AG04450 (cell line): ENCODE measurements at regions of chr1 and their contacts with region 1.

Region 1: DNA sequence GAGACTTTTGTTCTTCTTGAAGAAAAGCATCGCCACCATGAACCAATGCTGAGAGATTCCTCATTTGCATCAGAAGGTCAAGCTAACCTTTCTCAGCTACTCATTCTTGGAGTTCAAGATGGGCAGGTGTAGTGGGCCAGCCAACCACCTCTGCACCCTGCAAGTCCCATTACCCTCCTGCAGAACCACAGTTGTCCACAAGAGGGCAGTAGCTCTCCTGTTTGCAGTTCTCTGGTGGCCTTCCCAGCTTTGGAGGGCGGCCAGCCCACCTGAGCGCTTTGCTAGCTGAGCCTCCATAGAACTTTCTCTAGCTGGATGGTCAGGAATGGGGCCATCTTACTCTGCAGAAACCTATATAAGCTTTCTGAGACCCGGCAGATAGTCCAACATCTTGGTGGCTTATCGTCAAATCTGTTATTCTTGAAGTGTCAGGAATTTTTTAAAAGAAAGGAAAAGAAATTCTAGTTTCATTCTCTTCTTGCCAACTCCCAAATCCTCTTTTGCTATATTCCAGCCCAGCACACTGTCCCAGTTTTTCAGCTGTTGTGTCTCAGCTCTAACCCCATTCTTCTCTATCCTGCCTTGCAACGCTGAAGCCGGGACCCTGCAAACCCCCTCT is 11.0 kb upstream of the LMX1A start:
- DNase-seq: peak; percentile 29
- H3K4me3 ChIP-seq: no peak overlapping the region
- H3K27ac ChIP-seq: no peak overlapping the region
- H3K27me3 ChIP-seq: peaks cover 2% of the 10 kb centered on the region
- CTCF ChIP-seq: peak; percentile 89

Region 2: DNA sequence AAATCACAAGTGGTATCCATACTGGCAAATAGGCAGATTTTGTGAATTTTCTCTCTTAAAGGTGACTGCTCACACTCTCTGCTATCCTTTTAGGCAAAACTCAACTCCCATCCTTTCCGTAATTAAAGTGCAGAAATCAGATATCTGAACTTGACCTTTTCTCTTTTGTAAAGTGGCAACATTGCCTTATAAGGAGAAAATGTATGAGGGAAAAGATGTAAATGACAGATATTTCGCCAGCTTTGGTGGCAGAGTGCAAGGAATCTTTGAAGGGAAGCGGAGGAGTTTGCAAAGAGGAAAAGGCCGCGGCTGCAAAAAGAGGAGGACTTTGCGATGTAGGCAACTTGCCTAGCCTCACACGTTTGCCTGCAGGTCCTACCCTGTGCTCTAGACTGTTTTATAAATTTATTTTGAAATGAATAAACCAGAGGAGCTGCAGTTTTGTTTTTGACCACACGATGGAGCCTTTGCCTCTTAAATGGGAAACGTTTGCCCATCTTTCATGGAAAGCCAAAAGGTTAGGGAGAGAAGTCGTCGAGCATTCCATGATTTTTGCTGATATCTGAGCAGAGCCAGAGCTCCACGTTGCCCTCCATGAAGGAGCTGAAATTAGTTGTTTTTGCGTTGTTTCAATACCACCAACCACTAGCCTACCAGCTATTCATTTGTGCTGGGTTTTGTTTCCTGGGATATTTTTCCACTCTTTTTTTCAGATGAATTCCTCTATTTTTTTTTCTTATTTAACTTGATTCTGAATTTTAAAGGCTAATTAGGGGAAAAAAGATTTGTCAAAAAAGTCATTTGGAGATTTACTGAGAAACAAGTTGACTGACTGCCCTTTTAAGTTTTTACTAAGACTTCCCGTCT is 253.2 kb before region 1 on chr1:
- CTCF ChIA-PET with region 1: interaction called, 23 read pairs
- POLR2A ChIA-PET with region 1: no interaction called
- DNase-seq: no peak
- H3K4me3 ChIP-seq: no peak overlapping the region
- H3K27ac ChIP-seq: no peak overlapping the region
- H3K27me3 ChIP-seq: peaks cover 2% of the 10 kb centered on the region
- CTCF ChIP-seq: peak; percentile 80

Region 3: GRCh38 chr1:165276314-165276713 is 91.2 kb before region 1 on chr1:
- CTCF ChIA-PET with region 1: no interaction called
- POLR2A ChIA-PET with region 1: no interaction called
- DNase-seq: no peak
- H3K4me3 ChIP-seq: no peak overlapping the region
- H3K27ac ChIP-seq: no peak overlapping the region
- H3K27me3 ChIP-seq: no peaks in the 10 kb centered on the region
- CTCF ChIP-seq: no peak

Region 4: DNA sequence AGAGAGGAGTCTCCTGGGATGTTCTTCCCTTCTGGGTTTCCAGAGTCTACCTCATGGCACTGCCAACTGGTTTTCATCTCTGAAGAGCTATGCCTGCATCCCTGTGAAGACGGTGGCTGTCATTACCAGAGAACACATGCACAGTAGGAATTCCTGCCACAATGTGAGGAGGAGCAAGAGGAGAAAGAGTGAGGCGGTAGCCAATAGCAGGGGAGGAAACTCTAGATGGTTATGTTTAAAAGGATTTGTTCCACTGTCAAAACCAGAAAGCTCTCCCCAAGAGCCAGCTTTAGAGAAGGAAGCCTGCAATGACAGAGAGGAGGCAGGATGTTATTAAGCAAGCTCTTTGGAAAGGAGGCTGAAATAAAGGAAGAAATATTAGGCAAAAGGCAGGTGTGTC is 23.3 kb before region 1 on chr1:
- CTCF ChIA-PET with region 1: interaction called, 23 read pairs
- POLR2A ChIA-PET with region 1: no interaction called
- DNase-seq: no peak
- H3K4me3 ChIP-seq: no peak overlapping the region
- H3K27ac ChIP-seq: no peak overlapping the region
- H3K27me3 ChIP-seq: peaks cover 2% of the 10 kb centered on the region
- CTCF ChIP-seq: no peak

Region 5: DNA sequence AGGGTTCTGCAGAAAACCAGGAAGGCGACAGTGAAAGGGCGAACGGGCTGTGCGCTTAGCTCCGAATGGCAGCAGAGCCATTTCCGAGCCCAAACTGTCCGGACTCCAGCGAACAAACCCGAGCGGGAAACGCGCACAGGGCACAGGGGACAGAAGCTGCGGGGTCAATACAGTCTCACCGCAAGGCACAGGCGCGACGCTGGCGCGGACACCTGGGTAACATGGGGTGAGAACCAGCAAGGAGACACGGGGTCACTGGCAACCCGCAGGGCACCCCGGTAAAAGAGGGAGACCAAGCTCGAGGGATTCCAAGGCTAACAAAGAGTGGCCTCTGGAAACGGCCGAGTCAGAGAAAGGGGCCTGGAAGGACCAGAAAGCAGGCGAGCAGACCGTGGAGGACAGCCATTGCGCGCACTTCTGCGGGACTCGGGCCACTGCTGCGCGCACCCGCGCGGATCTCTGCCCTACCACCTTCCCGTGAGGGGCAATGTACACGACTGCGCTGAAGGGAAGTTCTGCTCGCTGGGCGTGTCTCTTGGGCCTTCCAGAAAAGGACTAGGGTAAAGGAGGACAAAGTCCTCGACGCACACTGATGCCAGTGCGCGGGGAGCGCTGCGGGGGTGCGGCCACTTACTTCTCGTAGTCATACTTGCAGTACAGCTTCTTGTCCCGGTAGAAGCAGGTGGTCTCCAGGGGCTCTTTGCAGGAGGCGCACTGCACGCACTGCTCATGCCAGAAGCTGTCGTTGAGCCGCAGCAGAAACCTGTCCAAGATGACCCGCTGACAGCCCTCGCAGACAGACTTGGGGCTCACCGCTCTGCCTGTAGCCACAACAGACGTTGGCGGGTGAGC is 14.8 kb before region 1 on chr1:
- CTCF ChIA-PET with region 1: interaction called, 23 read pairs
- POLR2A ChIA-PET with region 1: no interaction called
- DNase-seq: no peak
- H3K4me3 ChIP-seq: no peak overlapping the region
- H3K27ac ChIP-seq: no peak overlapping the region
- H3K27me3 ChIP-seq: peaks cover 54% of the 10 kb centered on the region
- CTCF ChIP-seq: no peak

Region 6: GRCh38 chr1:165531021-165531420 is 163.5 kb after region 1 on chr1:
- CTCF ChIA-PET with region 1: no interaction called
- POLR2A ChIA-PET with region 1: no interaction called
- DNase-seq: no peak
- H3K4me3 ChIP-seq: no peak overlapping the region
- H3K27ac ChIP-seq: no peak overlapping the region
- H3K27me3 ChIP-seq: peaks cover 4% of the 10 kb centered on the region
- CTCF ChIP-seq: no peak

Region 7: DNA sequence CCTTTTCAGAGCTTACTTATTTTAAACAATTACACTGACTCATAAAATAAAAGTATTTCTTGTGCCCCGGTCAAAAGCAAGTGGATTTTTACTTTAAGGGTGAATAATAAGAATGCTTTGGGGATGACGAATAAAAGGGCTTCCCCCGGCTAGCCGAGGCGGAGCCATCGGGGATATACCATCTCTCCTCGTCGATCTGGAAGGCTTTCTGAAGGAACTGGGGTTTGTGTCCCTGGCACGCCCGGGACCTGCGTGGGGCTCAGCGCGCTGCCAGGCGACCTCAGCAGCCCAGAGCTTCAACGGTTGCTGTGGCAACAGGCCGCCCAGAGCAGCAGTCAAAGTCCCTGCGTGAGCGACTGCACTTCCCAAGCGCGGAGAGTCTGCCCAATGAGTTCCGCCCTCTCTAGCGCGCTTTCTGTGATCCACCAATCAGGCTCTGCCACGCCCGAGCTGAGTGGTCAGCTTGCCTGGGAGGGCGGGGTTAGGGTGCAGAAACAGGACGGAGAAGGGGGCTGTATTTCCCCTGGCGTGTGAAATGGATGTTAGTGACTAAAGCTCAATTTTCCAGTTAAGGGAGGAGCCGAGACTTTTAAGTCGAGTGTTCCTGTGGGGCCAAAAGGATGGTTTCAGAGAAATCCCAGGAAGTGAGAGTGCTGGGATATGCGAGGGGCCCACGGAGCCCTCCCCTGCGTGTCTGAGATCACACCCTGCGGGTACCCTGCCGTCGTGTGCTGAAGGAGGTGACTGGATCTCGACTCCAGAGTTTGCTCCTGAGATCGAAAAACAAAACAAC is 230.6 kb after region 1 on chr1:
- CTCF ChIA-PET with region 1: interaction called, 30 read pairs
- POLR2A ChIA-PET with region 1: no interaction called
- DNase-seq: peak; percentile 94
- H3K4me3 ChIP-seq: peak overlapping the region; percentile 69
- H3K27ac ChIP-seq: peak overlapping the region; percentile 92
- H3K27me3 ChIP-seq: peaks cover 14% of the 10 kb centered on the region
- CTCF ChIP-seq: no peak